Mammary epithelial cell (primary cell): ENCODE measurements at regions of chr11 and their contacts with region 1.

Region 1: GRCh38 chr11:39932966-39933365 is 1526.5 kb downstream of the LRRC4C start:
- DNase-seq: no peak
- H3K4me3 ChIP-seq: no peak overlapping the region
- H3K27ac ChIP-seq: no peak overlapping the region
- H3K4me1 ChIP-seq: no peaks in the 10 kb centered on the region
- H3K27me3 ChIP-seq: no peaks in the 10 kb centered on the region
- CTCF ChIP-seq: no peak

Region 2: DNA sequence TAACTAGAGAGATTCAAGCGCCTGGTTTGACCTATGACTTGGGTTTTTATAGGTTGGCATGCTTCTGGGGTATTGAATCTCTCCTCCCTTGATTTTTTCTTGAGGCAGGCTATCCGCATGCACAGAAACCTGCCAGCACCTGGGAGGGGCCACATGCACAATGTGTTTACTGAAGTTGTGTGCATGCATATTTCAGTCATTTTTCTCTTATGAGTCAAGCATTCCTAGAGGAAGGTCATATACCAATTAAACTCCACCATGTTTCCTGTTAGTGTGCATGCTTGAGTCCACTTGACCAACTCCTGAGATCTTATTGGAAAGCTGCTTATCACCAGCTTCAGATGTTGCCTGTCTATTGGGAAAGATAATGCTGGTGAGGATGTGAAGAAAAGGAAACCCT is 191.9 kb before region 1 on chr11:
- CTCF ChIA-PET with region 1: no interaction called
- dilution Hi-C with region 1: no loop called
- in situ Hi-C with region 1: no loop called
- intact Hi-C with region 1: no loop called
- DNase-seq: peak; percentile 16
- H3K4me3 ChIP-seq: no peak overlapping the region
- H3K27ac ChIP-seq: no peak overlapping the region
- H3K4me1 ChIP-seq: no peaks in the 10 kb centered on the region
- H3K27me3 ChIP-seq: no peaks in the 10 kb centered on the region
- CTCF ChIP-seq: no peak

Region 3: GRCh38 chr11:39971938-39972337 is 39.0 kb after region 1 on chr11:
- CTCF ChIA-PET with region 1: no interaction called
- dilution Hi-C with region 1: loop called (anchors 5 kb)
- in situ Hi-C with region 1: no loop called
- intact Hi-C with region 1: no loop called
- DNase-seq: no peak
- H3K4me3 ChIP-seq: no peak overlapping the region
- H3K27ac ChIP-seq: no peak overlapping the region
- H3K4me1 ChIP-seq: no peaks in the 10 kb centered on the region
- H3K27me3 ChIP-seq: no peaks in the 10 kb centered on the region
- CTCF ChIP-seq: no peak